ENCODE measurements at regions of chr12 and their contacts with region 1.

Region 1: GRCh38 chr12:107760809-107761501 is at the start of gene PRDM4:
- DNase-seq: peak; percentile 65
- ATAC-seq: peak; percentile 96
- H3K4me3 ChIP-seq: peak within 1 kb of the TSS; percentile 78
- H3K27ac ChIP-seq: peak within 1 kb of the TSS; percentile 42
- H3K4me1 ChIP-seq: peaks cover 3% of the 10 kb centered on the region; the same call in 1 of the 2 replicates
- H3K27me3 ChIP-seq: no peaks in the 10 kb centered on the region
- CTCF ChIP-seq: peak; percentile 28 to 82 (median 73); a peak in 5 of 6 replicates
- EP300 ChIP-seq: 0 out of 4 replicates have a peak, but pooled peaks of 1 of the 2 experiments have one; percentile 11
- POLR2A ChIP-seq: peak; percentile 89
- RAD21 ChIP-seq: peak; percentile 91
- polyA plus RNA-seq, gene PRDM4: 5.1 to 5.9 TPM

Region 2: DNA sequence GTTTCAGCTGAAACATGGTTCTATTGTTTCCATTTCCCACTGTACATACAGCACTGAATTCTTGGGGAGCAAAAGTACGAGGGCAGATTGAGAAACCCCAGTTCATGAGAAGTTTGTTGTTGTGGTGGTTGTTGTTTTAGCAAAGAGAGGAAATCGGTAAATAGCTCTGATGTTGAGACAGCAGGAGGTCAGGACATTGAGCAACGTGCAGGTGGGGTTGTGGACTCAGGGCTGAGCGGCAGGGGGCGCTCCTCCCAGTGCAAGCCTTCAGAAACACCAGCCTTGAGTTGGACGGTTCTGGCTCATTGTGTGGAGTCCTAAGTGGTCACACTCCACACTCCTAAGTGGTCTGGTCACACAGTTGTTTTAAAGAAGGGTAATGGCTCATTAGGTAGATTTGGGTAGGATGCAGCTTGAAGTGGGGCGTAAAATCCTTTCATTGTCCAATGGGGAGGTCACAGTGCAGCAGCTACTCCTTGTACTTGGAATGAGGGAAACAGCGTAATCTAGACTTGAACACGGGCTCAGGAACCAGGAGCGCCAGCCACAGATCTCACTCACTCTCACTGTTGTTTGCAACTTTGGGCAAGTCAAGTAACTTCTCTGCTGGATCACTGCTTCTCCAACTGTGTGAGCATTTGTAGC is 89.8 kb before region 1 on chr12:
- CTCF ChIA-PET with region 1: interaction called, 20 read pairs
- POLR2A ChIA-PET with region 1: interaction called, 3 read pairs
- RAD21 ChIA-PET with region 1: interaction called, 14 read pairs
- SMC1A ChIA-PET with region 1: interaction called, 3 read pairs
- in situ Hi-C with region 1: no loop called
- intact Hi-C with region 1: no loop called
- DNase-seq: no peak
- ATAC-seq: peak; percentile 91
- H3K4me3 ChIP-seq: no peak overlapping the region
- H3K27ac ChIP-seq: no peak overlapping the region
- H3K4me1 ChIP-seq: no peaks in the 10 kb centered on the region
- H3K27me3 ChIP-seq: peaks cover 5% of the 10 kb centered on the region in 2 experiments; a peak in 2 of 4 replicates
- CTCF ChIP-seq: peak; percentile 69 to 89 (median 84)
- EP300 ChIP-seq: no peak
- POLR2A ChIP-seq: no peak
- RAD21 ChIP-seq: peak; percentile 10; the same call in 1 of the 2 replicates

Region 3: GRCh38 chr12:107685360-107686248 is 75.4 kb before region 1 on chr12 and contains the start of gene PWP1:
- CTCF ChIA-PET with region 1: no interaction called
- POLR2A ChIA-PET with region 1: interaction called, 3 read pairs
- RAD21 ChIA-PET with region 1: interaction called, 4 read pairs
- SMC1A ChIA-PET with region 1: interaction called, 3 read pairs
- in situ Hi-C with region 1: loop called (anchors 5 kb)
- intact Hi-C with region 1: loop called (anchors 2 kb)
- DNase-seq: peak; percentile 84
- ATAC-seq: peak; percentile 96
- H3K4me3 ChIP-seq: peak within 1 kb of the TSS; percentile 93
- H3K27ac ChIP-seq: peak within 1 kb of the TSS; percentile 72
- H3K4me1 ChIP-seq: peaks cover 3% of the 10 kb centered on the region; the same call in 1 of the 2 replicates
- H3K27me3 ChIP-seq: no peaks in the 10 kb centered on the region
- CTCF ChIP-seq: no peak
- EP300 ChIP-seq: peak in 1 of 2 experiments; percentile 38; a peak in 1 of 4 replicates
- POLR2A ChIP-seq: peak; percentile 99
- RAD21 ChIP-seq: no peak
- polyA plus RNA-seq, gene PWP1: 244 to 283 TPM

Region 4: DNA sequence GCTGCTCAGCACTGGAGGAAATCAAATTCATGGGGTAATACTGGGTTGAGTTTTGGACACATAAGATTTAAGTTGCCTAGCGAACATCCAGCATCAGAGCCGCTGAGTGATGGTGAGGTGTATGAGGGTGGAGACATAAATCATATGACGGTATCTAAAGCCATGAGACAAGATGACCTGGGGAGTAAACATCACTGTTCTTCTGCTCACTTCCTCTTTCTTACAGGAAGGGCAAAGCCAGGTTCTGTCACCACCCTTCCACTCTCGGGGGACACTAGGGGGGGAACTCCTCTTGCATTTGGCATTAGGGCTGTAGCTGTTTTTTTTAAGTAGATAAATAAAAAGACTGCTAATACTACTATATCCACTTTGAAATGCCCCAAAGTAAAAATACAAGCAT is 24.0 kb before region 1 on chr12:
- CTCF ChIA-PET with region 1: interaction called, 11 read pairs
- POLR2A ChIA-PET with region 1: no interaction called
- RAD21 ChIA-PET with region 1: interaction called, 7 read pairs
- SMC1A ChIA-PET with region 1: interaction called, 7 read pairs
- in situ Hi-C with region 1: no loop called
- intact Hi-C with region 1: no loop called
- DNase-seq: peak; percentile 57
- ATAC-seq: peak; percentile 100
- H3K4me3 ChIP-seq: no peak overlapping the region
- H3K27ac ChIP-seq: no peak overlapping the region
- H3K4me1 ChIP-seq: peaks cover 3% of the 10 kb centered on the region; the same call in 1 of the 2 replicates
- H3K27me3 ChIP-seq: no peaks in the 10 kb centered on the region
- CTCF ChIP-seq: peak; percentile 35 to 45 (median 36); a peak in 5 of 6 replicates
- EP300 ChIP-seq: peak in 1 of 2 experiments; percentile 25; a peak in 1 of 4 replicates
- POLR2A ChIP-seq: no peak
- RAD21 ChIP-seq: peak; percentile 36; the same call in 1 of the 2 replicates

Region 5: DNA sequence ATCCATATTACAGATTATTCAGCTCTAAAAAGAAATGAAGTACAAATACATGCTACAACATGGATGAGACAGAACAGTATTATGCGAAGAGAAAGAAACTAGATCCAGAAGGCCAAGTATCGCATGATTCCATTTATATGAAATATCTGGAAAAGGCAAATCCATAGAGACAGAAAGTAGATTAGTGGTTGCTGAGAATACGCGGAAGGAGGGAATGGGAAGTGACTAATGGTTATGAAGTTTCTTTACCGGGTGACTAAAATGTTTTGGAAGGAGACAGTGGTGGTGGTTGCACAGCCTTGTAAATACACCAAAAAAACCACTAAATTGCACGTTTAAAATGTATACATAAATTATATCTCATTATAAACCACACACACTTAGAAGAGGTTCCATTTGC is 12.5 kb before region 1 on chr12:
- CTCF ChIA-PET with region 1: interaction called, 6 read pairs
- POLR2A ChIA-PET with region 1: interaction called, 6 read pairs
- RAD21 ChIA-PET with region 1: no interaction called
- SMC1A ChIA-PET with region 1: interaction called, 12 read pairs
- in situ Hi-C with region 1: no loop called
- intact Hi-C with region 1: no loop called
- DNase-seq: no peak
- ATAC-seq: no peak
- H3K4me3 ChIP-seq: no peak overlapping the region
- H3K27ac ChIP-seq: no peak overlapping the region
- H3K4me1 ChIP-seq: no peaks in the 10 kb centered on the region
- H3K27me3 ChIP-seq: no peaks in the 10 kb centered on the region
- CTCF ChIP-seq: no peak
- EP300 ChIP-seq: no peak
- POLR2A ChIP-seq: no peak
- RAD21 ChIP-seq: no peak

Region 6: DNA sequence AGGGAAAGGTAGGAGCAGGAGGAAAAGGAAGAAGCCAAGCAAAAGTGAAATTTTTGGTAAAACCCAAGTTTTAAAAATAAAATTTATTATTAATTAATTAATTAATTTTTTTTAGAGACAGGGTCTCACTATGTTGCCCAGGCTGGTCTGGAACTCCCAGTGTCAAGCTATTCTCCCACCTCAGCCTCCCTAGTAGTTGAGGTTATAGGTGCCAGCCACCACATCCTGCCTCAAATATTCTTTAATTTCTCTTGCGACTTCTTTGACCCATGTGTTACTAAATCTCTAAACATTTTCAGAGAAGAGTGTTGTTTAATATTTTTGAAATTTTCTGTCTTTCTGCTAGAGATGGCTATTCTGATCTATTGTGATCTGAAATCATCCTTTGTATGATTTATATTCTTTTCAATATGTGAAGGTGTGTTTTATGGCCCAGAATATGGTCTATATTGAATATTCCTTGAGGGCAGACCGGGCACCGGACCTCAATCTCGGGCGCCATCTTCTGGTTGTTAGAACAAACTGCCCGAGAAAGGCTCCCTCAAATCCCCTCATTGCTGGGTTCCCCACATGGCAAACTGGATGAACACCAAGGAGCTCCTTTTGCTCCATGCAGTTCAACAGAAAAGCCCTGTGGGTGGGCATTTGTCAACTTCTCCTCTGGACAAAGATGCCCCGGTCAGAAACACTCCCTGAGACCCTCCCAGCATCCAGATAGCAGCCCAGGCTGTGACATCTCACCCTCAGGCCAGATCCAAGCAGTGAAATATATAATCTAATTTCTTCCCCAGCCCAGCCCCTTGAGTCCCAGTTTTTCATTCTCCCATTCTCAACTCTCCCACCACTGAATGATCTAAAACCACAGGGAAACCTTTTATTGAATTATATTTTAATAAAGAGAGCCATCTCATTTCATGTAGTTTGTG is 124.1 kb after region 1 on chr12:
- CTCF ChIA-PET with region 1: interaction called, 58 read pairs
- POLR2A ChIA-PET with region 1: no interaction called
- RAD21 ChIA-PET with region 1: interaction called, 23 read pairs
- SMC1A ChIA-PET with region 1: interaction called, 20 read pairs
- in situ Hi-C with region 1: loop called (anchors 5 kb)
- intact Hi-C with region 1: loop called (anchors 1 kb)
- DNase-seq: no peak
- ATAC-seq: peak; percentile 94
- H3K4me3 ChIP-seq: no peak overlapping the region
- H3K27ac ChIP-seq: no peak overlapping the region
- H3K4me1 ChIP-seq: no peaks in the 10 kb centered on the region
- H3K27me3 ChIP-seq: no peaks in the 10 kb centered on the region
- CTCF ChIP-seq: peak; percentile 73 to 85 (median 74)
- EP300 ChIP-seq: no peak
- POLR2A ChIP-seq: no peak
- RAD21 ChIP-seq: peak; percentile 92

Region 7: GRCh38 chr12:107903341-107904061 is 142.5 kb after region 1 on chr12:
- CTCF ChIA-PET with region 1: interaction called, 7 read pairs
- POLR2A ChIA-PET with region 1: interaction called, 3 read pairs
- RAD21 ChIA-PET with region 1: no interaction called
- SMC1A ChIA-PET with region 1: interaction called, 3 read pairs
- in situ Hi-C with region 1: no loop called
- intact Hi-C with region 1: loop called (anchors 5 kb)
- DNase-seq: peak; percentile 40
- ATAC-seq: peak; percentile 99
- H3K4me3 ChIP-seq: peak overlapping the region; percentile 62; the same call in 1 of the 2 replicates
- H3K27ac ChIP-seq: no peak overlapping the region
- H3K4me1 ChIP-seq: no peaks in the 10 kb centered on the region; the same call in 1 of the 2 replicates
- H3K27me3 ChIP-seq: no peaks in the 10 kb centered on the region; a peak in 2 of 4 replicates
- CTCF ChIP-seq: no peak
- EP300 ChIP-seq: no peak
- POLR2A ChIP-seq: peak; percentile 78
- RAD21 ChIP-seq: no peak